ENCODE measurements at regions of chr2 and their contacts with region 1.

Region 1: DNA sequence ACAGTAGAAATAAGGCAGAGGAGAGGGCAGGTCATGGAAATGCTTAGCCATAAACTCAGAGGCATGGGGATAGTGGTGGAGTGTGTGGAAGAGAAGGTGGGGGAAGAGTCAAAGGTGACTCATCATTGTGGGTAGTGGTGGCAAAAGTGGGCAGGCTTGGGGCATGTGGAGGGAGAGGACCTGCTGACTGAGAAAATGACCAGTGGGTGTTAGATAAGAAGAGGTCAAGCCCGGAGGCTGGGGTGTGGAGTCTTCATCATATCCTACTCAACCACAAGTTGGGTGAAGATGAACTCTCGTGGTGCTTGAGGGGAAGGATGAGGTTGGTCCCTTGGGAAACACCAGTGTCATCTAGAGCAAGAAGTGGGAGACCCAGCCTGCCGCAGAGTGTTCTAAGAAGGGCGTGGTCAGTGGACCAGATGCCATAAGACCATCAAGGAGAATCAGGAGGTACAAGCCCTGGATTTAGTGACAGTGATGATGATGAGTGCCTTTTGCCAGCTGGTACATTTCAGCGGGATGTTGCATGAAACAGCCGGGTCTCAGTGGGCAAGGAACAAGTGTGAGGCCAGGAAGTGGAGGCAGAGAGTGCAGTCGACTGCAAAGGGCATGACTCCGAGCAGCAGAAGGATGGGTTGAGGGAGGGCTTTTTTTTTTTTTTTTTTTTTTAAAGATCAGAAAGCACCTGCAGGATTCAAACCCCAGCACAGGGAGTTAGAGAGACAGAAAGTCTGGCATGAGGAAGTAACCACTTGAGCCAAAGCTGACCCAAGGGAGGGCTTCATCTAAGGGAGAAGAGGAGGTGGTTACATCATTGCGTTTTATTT is 122.6 kb upstream of the SPRED2 start:
- DNase-seq: no peak
- ATAC-seq: no peak
- H3K4me3 ChIP-seq: no peak overlapping the region
- H3K27ac ChIP-seq: no peak overlapping the region
- H3K4me1 ChIP-seq: peaks cover 11% of the 10 kb centered on the region; the same call in 1 of the 2 replicates
- H3K27me3 ChIP-seq: 0 out of 5 replicates have a peak, but pooled peaks cover 0 to 9% of the 10 kb centered on the region in 2 experiments
- CTCF ChIP-seq: no peak
- EP300 ChIP-seq: no peak
- POLR2A ChIP-seq: no peak
- RAD21 ChIP-seq: no peak

Region 2: GRCh38 chr2:64609227-64609941 is 945.6 kb before region 1 on chr2:
- CTCF ChIA-PET with region 1: no interaction called
- POLR2A ChIA-PET with region 1: no interaction called
- in situ Hi-C with region 1: loop called (anchors 25 kb)
- intact Hi-C with region 1: no loop called
- DNase-seq: no peak
- ATAC-seq: peak; percentile 34
- H3K4me3 ChIP-seq: peak overlapping the region; percentile 51 to 68 (median 58); a peak in 5 of 6 replicates
- H3K27ac ChIP-seq: no peak overlapping the region
- H3K4me1 ChIP-seq: peaks cover 28% of the 10 kb centered on the region
- H3K27me3 ChIP-seq: no peaks in the 10 kb centered on the region
- CTCF ChIP-seq: no peak; the same call in 1 of the 2 replicates
- EP300 ChIP-seq: no peak
- POLR2A ChIP-seq: peak in 1 of 2 experiments; percentile 46; a peak in 1 of 4 replicates
- RAD21 ChIP-seq: peak; percentile 35; the same call in 1 of the 2 replicates

Region 3: GRCh38 chr2:65264821-65265670 is 289.9 kb before region 1 on chr2:
- CTCF ChIA-PET with region 1: interaction called, 56 read pairs
- POLR2A ChIA-PET with region 1: no interaction called
- in situ Hi-C with region 1: loop called (anchors 5 kb)
- intact Hi-C with region 1: loop called (anchors 1 kb)
- DNase-seq: peak; percentile 84
- ATAC-seq: peak; percentile 79
- H3K4me3 ChIP-seq: no peak overlapping the region
- H3K27ac ChIP-seq: no peak overlapping the region
- H3K4me1 ChIP-seq: no peaks in the 10 kb centered on the region
- H3K27me3 ChIP-seq: no peaks in the 10 kb centered on the region
- CTCF ChIP-seq: peak; percentile 87
- EP300 ChIP-seq: no peak
- POLR2A ChIP-seq: no peak
- RAD21 ChIP-seq: peak; percentile 84; the same call in 1 of the 2 replicates

Region 4: GRCh38 chr2:65281627-65282351 is 273.2 kb before region 1 on chr2:
- CTCF ChIA-PET with region 1: no interaction called
- POLR2A ChIA-PET with region 1: no interaction called
- in situ Hi-C with region 1: no loop called
- intact Hi-C with region 1: loop called (anchors 5 kb)
- DNase-seq: no peak
- ATAC-seq: peak; percentile 55
- H3K4me3 ChIP-seq: no peak overlapping the region
- H3K27ac ChIP-seq: no peak overlapping the region
- H3K4me1 ChIP-seq: peaks cover 30% of the 10 kb centered on the region
- H3K27me3 ChIP-seq: no peaks in the 10 kb centered on the region; a peak in 1 of 5 replicates
- CTCF ChIP-seq: no peak
- EP300 ChIP-seq: no peak
- POLR2A ChIP-seq: no peak
- RAD21 ChIP-seq: no peak

Region 5: GRCh38 chr2:65320042-65320725 is 234.8 kb before region 1 on chr2:
- CTCF ChIA-PET with region 1: no interaction called
- POLR2A ChIA-PET with region 1: no interaction called
- in situ Hi-C with region 1: no loop called
- intact Hi-C with region 1: loop called (anchors 1 kb)
- DNase-seq: peak; percentile 66
- ATAC-seq: peak; percentile 69
- H3K4me3 ChIP-seq: no peak overlapping the region
- H3K27ac ChIP-seq: no peak overlapping the region
- H3K4me1 ChIP-seq: peaks cover 19% of the 10 kb centered on the region
- H3K27me3 ChIP-seq: no peaks in the 10 kb centered on the region
- CTCF ChIP-seq: peak; percentile 40
- EP300 ChIP-seq: no peak
- POLR2A ChIP-seq: no peak
- RAD21 ChIP-seq: no peak

Region 6: GRCh38 chr2:65382776-65383357 is 172.1 kb before region 1 on chr2:
- CTCF ChIA-PET with region 1: no interaction called
- POLR2A ChIA-PET with region 1: no interaction called
- in situ Hi-C with region 1: no loop called
- intact Hi-C with region 1: loop called (anchors 1 kb)
- DNase-seq: peak; percentile 86
- ATAC-seq: peak; percentile 73
- H3K4me3 ChIP-seq: peak overlapping the region in 1 of 3 experiments; percentile 47; a peak in 3 of 6 replicates
- H3K27ac ChIP-seq: peak overlapping the region; percentile 59
- H3K4me1 ChIP-seq: peaks cover 99% of the 10 kb centered on the region
- H3K27me3 ChIP-seq: no peaks in the 10 kb centered on the region
- CTCF ChIP-seq: peak; percentile 70
- EP300 ChIP-seq: peak in 1 of 2 experiments; percentile 66; a peak in 2 of 4 replicates
- POLR2A ChIP-seq: no peak
- RAD21 ChIP-seq: peak; percentile 61